ENCODE measurements at regions of chr15 and their contacts with region 1.

Region 1: DNA sequence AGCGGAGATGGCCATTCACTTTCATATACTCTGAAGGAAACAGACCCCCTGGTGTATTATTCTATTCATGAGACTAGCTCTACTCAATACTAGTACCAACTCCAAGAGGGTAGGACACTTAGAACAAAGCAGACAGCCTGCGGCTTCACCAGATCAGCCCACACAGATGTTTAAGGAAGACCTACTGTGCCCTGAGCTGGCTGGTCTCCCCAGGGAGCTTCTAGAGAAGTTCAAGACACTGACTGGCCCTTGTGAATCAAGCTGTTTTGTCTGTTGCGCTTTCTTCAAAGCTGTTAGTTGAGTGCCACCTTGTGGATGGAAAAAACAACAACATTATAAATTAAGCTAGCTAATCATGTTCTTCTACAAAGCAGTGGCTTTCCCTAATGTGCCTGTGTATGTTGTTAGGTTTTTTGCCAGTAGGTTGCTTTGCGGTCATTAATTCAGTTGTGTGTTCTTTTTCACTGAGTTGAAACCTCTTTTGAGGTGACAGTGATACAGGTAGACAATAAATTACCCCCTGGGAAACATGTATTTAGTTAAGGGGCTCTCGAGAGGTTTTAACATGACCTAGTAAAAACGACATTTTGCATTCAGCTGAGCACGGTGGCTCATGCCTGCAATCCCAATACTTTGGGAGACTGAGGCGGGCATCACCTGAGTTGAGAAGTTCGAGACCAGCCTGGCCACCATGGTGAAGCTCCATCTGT is 64.2 kb upstream of the MYZAP start:
- DNase-seq: peak; percentile 23
- ATAC-seq: no peak
- H3K4me3 Mint-ChIP-seq: no peak overlapping the region
- H3K27ac Mint-ChIP-seq: no peak overlapping the region
- H3K4me1 Mint-ChIP-seq: no peaks in the 10 kb centered on the region
- H3K27me3 Mint-ChIP-seq: peaks cover 14% of the 10 kb centered on the region

Region 2: DNA sequence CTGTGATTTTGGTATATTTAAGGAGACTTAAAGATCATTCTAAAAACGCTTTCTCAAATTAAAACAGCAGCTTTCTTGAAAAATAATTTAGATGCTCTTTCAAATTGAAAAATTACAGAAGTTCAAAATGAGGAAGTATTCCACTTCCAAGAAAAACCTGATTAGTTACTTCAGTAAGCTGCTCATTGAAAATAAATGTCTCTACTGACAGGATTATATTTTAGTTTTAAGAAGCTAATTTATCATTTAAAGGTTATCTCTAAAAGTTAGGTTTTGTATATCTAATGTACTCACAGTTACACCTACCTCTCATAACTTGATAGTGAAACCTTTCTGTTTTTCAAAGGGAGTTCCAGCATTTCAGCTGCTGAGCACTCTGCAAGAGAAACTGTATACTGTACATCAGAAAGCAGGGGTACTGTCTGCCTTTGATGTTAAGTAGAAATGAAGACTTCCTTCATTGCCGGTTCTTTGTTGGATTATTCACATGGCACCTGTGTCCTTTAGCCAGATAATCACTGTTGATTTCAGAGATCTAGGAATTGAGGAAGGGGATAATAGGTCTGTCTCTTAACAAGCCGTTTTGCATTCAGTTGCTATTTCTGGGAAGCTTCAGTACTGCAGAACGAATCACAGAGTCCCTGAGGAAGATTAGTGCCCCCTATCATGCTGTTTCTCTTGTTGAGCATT is 447.5 kb before region 1 on chr15:
- CTCF ChIA-PET with region 1: no interaction called
- POLR2A ChIA-PET with region 1: no interaction called
- DNase-seq: no peak
- ATAC-seq: no peak
- H3K4me3 Mint-ChIP-seq: no peak overlapping the region
- H3K27ac Mint-ChIP-seq: no peak overlapping the region
- H3K4me1 Mint-ChIP-seq: peaks cover 16% of the 10 kb centered on the region
- H3K27me3 Mint-ChIP-seq: no peaks in the 10 kb centered on the region

Region 3: DNA sequence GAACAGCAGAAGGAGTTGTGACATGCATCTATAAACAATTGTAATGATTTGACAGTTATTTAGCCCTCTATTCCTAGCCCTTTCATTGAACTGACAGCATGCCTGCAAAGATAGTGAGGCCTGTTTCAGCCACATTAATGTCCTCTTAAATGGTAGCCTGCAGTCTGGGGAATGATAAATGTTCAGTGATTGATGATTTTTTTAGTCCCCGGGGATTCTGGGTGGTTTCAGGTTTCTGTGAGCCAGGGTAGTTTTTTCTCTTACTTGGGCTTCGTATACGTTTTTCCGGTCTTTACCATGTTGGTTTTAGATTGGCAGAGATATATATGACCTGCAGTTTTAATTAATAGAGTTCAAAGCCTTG is 437.1 kb before region 1 on chr15:
- CTCF ChIA-PET with region 1: no interaction called
- POLR2A ChIA-PET with region 1: no interaction called
- DNase-seq: no peak
- ATAC-seq: no peak
- H3K4me3 Mint-ChIP-seq: no peak overlapping the region
- H3K27ac Mint-ChIP-seq: no peak overlapping the region
- H3K4me1 Mint-ChIP-seq: peaks cover 10% of the 10 kb centered on the region
- H3K27me3 Mint-ChIP-seq: no peaks in the 10 kb centered on the region

Region 4: DNA sequence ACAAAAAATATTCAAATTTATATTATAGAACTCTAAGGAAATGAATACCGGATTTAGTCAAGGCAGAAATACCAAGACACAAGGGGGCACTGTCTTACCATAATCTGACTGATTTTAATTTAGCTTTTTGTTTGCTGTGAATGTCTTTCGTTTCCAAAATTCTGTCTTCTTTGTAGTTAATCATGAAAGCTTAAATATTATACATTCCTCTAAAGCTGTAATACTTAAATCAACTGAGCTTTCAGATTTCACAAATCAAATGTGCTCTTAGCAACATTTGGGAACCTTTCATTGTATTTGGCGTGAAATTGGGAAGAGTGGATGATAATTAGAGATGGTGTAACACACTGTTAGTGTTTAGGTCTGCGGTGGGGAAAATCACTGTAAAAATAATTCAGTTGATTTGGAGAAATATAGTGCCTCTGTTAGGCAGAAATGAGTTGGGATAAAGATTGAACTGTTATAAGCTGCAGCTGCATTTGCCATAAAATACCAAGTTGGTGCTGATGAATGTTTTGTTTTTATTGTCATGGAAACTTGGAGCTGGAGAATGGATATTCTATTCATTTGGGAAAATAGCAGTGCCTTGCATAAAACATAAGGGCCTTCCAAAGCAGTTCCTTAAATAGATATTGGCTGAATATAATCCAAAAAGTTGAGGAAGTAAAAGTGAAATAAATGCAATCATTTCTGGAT is 380.9 kb before region 1 on chr15:
- CTCF ChIA-PET with region 1: interaction called, 20 read pairs
- POLR2A ChIA-PET with region 1: no interaction called
- DNase-seq: peak; percentile 28
- ATAC-seq: no peak
- H3K4me3 Mint-ChIP-seq: no peak overlapping the region
- H3K27ac Mint-ChIP-seq: no peak overlapping the region
- H3K4me1 Mint-ChIP-seq: peaks cover 3% of the 10 kb centered on the region
- H3K27me3 Mint-ChIP-seq: no peaks in the 10 kb centered on the region

Region 5: DNA sequence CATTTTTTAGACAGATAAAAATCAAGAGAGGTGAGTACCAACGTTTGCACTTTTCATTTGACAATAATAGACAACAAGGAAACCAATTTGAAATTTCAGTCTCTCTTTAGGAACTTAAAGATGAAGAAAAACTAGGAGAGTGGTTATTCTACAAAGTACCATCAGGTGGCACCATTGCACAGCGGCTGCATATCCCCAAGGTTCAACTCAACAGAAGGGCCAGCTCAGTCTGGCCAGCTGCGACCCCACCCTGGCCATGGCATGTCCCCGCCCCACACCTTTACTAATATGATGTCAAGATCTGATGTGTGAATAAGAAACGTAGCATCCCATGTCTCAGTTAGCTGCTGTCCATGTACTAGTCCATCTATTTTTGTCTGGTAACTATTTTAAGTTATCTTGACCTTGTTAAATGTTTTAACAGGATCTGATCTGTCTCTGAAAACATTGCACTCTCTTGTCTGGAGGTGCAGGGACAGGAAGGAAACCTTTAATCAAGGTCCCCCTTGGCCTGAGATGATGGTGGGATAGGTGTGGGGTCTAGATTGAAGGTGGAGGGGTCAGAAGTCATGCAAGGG is 186.8 kb before region 1 on chr15:
- CTCF ChIA-PET with region 1: interaction called, 111 read pairs
- POLR2A ChIA-PET with region 1: no interaction called
- DNase-seq: peak; percentile 52
- ATAC-seq: peak; percentile 65
- H3K4me3 Mint-ChIP-seq: no peak overlapping the region
- H3K27ac Mint-ChIP-seq: no peak overlapping the region
- H3K4me1 Mint-ChIP-seq: no peaks in the 10 kb centered on the region
- H3K27me3 Mint-ChIP-seq: peaks cover 2% of the 10 kb centered on the region

Region 6: DNA sequence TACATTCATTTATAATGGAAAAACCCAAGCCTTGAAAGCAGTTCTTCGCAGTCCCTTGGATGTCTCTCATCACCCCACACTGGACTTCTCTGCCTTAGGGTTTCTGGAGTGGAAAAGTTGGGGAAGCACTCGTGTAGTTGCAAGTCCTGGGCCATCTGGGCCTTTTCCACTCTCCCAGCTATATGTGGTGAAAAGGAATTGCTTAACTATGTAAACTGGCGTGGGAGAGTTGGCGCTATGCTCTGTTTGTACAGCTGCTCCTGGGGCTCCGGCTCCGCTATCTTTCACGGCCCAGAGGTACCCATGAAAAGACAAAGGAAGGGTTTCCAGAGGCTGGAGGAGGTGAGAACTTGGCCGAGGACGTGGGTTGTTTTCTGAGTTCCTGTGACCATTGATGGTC is 16.9 kb before region 1 on chr15:
- CTCF ChIA-PET with region 1: interaction called, 10 read pairs
- POLR2A ChIA-PET with region 1: no interaction called
- DNase-seq: no peak
- ATAC-seq: no peak
- H3K4me3 Mint-ChIP-seq: no peak overlapping the region
- H3K27ac Mint-ChIP-seq: no peak overlapping the region
- H3K4me1 Mint-ChIP-seq: no peaks in the 10 kb centered on the region
- H3K27me3 Mint-ChIP-seq: peaks cover 5% of the 10 kb centered on the region

Region 7: GRCh38 chr15:57541805-57542504 is 14.4 kb after region 1 on chr15:
- CTCF ChIA-PET with region 1: interaction called, 18 read pairs
- POLR2A ChIA-PET with region 1: no interaction called
- DNase-seq: peak; percentile 42
- ATAC-seq: no peak
- H3K4me3 Mint-ChIP-seq: no peak overlapping the region
- H3K27ac Mint-ChIP-seq: no peak overlapping the region
- H3K4me1 Mint-ChIP-seq: no peaks in the 10 kb centered on the region
- H3K27me3 Mint-ChIP-seq: no peaks in the 10 kb centered on the region

Region 8: GRCh38 chr15:57595011-57595866 is 67.7 kb after region 1 on chr15:
- CTCF ChIA-PET with region 1: no interaction called
- POLR2A ChIA-PET with region 1: no interaction called
- DNase-seq: no peak
- ATAC-seq: no peak
- H3K4me3 Mint-ChIP-seq: no peak overlapping the region
- H3K27ac Mint-ChIP-seq: no peak overlapping the region
- H3K4me1 Mint-ChIP-seq: peaks cover 4% of the 10 kb centered on the region
- H3K27me3 Mint-ChIP-seq: peaks cover 36% of the 10 kb centered on the region